ENCODE measurements at regions of chr3 and their contacts with region 1.

Region 1: GRCh38 chr3:63228087-63229023 is 49.8 kb upstream of the SYNPR start:
- DNase-seq: no peak
- H3K4me3 Mint-ChIP-seq: no peak overlapping the region
- H3K27ac Mint-ChIP-seq: no peak overlapping the region
- H3K4me1 Mint-ChIP-seq: peaks cover 4% of the 10 kb centered on the region
- H3K27me3 Mint-ChIP-seq: no peaks in the 10 kb centered on the region

Region 2: GRCh38 chr3:62622553-62623193 is 605.7 kb before region 1 on chr3:
- intact Hi-C with region 1: loop called (anchors 10 kb)
- DNase-seq: no peak
- H3K4me3 Mint-ChIP-seq: no peak overlapping the region
- H3K27ac Mint-ChIP-seq: no peak overlapping the region
- H3K4me1 Mint-ChIP-seq: no peaks in the 10 kb centered on the region
- H3K27me3 Mint-ChIP-seq: peaks cover 5% of the 10 kb centered on the region

Region 3: GRCh38 chr3:62665598-62666437 is 562.5 kb before region 1 on chr3:
- intact Hi-C with region 1: loop called (anchors 10 kb)
- DNase-seq: no peak
- H3K4me3 Mint-ChIP-seq: no peak overlapping the region
- H3K27ac Mint-ChIP-seq: no peak overlapping the region
- H3K4me1 Mint-ChIP-seq: no peaks in the 10 kb centered on the region
- H3K27me3 Mint-ChIP-seq: no peaks in the 10 kb centered on the region